Thyroid gland (tissue), 4 donors: ENCODE measurements at regions of chr11 and their contacts with region 1.

Region 1: DNA sequence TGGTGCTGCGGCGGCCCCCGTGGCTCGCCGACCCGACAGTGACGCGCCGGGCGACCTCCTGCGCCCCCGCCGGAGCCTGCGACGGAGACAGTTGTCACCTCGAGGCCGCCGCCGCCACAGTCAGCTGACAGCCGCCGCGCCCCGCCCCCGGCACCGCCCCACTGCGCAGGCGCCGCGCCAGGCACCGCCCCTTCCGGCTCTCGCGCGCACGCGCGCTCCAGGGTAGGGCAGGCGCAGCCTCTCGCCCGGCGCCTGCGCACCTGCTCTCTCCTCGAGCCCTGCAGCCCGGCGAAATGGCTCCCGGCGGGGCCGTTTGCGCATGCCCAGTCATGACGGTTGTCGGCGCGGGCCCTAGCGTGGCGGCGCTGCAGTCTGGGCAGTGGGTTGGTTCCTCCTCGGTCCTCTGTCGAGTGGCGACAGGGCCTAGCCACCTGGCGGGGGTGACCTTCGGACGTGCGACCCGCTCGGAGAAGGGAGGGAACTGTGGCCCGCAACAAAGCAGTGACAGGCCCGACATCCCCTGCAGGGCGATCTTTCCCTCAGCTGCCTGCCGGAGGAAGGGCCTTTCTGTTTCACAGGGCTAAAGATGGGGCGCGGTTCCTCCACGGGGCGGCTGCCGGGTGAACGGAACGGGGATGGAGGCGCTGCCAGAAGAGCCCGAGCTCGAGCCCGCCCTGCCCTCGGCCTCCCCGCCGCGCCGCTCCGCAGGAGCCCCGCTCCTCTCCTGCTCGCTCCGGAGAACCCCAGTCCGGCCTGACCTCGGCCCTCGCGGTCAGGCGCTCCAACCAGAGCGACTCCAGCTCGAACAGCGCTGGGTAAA is at the start of gene TOLLIP:
- DNase-seq: peak; percentile 93
- H3K4me3 ChIP-seq: peak within 1 kb of the TSS; percentile 79 to 93 (median 85)
- H3K27ac ChIP-seq: peak within 1 kb of the TSS; percentile 81 to 90 (median 86)
- H3K4me1 ChIP-seq: peaks cover 21 to 35% of the 10 kb centered on the region in 2 donors
- H3K27me3 ChIP-seq: no peaks in the 10 kb centered on the region
- CTCF ChIP-seq: peak in 2 of 6 experiments; percentile 17 to 25
- POLR2A ChIP-seq: peak in 1 of 2 donors; percentile 91
- total RNA-seq, gene TOLLIP: 37.1 to 74.4 (median 65.7) TPM

Region 2: GRCh38 chr11:1358286-1358685 is 48.6 kb after region 1 on chr11:
- intact Hi-C with region 1: no loop called
- DNase-seq: no peak
- H3K4me3 ChIP-seq: no peak overlapping the region
- H3K27ac ChIP-seq: no peak overlapping the region
- H3K4me1 ChIP-seq: no peaks in the 10 kb centered on the region
- H3K27me3 ChIP-seq: no peaks in the 10 kb centered on the region
- CTCF ChIP-seq: no peak
- POLR2A ChIP-seq: no peak

Region 3: GRCh38 chr11:1389103-1389931 is 79.6 kb after region 1 on chr11:
- intact Hi-C with region 1: loop called (anchors 5 kb)
- DNase-seq: peak; percentile 98
- H3K4me3 ChIP-seq: peak overlapping the region in 1 of 3 donors; percentile 37
- H3K27ac ChIP-seq: peak overlapping the region in 1 of 3 donors; percentile 46
- H3K4me1 ChIP-seq: peaks cover 12 to 14% of the 10 kb centered on the region in 2 donors
- H3K27me3 ChIP-seq: peaks cover 7% of the 10 kb centered on the region
- CTCF ChIP-seq: peak in 3 of 6 experiments; percentile 6 to 23 (median 8)
- POLR2A ChIP-seq: no peak